IMR-90 (cell line): ENCODE measurements at regions of chr11 and their contacts with region 1.

Region 1: GRCh38 chr11:8813658-8814057 is 97.3 kb upstream of the AKIP1 start:
- DNase-seq: peak; percentile 89
- ATAC-seq: peak; percentile 65
- H3K4me3 ChIP-seq: no peak overlapping the region
- H3K27ac ChIP-seq: peak overlapping the region; percentile 54; the same call in 1 of the 2 replicates
- H3K4me1 ChIP-seq: peaks cover 28% of the 10 kb centered on the region
- H3K27me3 ChIP-seq: no peaks in the 10 kb centered on the region
- CTCF ChIP-seq: peak; percentile 93
- POLR2A ChIP-seq: no peak
- RAD21 ChIP-seq: peak; percentile 89

Region 2: GRCh38 chr11:8283465-8284230 is 530.0 kb before region 1 on chr11:
- CTCF ChIA-PET with region 1: no interaction called
- POLR2A ChIA-PET with region 1: no interaction called
- dilution Hi-C with region 1: no loop called
- in situ Hi-C with region 1: no loop called
- intact Hi-C with region 1: no loop called
- DNase-seq: no peak
- ATAC-seq: peak; percentile 21; the same call in 1 of the 2 replicates
- H3K4me3 ChIP-seq: no peak overlapping the region
- H3K27ac ChIP-seq: no peak overlapping the region
- H3K4me1 ChIP-seq: no peaks in the 10 kb centered on the region
- H3K27me3 ChIP-seq: peaks cover 21% of the 10 kb centered on the region
- CTCF ChIP-seq: no peak
- POLR2A ChIP-seq: no peak
- RAD21 ChIP-seq: no peak

Region 3: DNA sequence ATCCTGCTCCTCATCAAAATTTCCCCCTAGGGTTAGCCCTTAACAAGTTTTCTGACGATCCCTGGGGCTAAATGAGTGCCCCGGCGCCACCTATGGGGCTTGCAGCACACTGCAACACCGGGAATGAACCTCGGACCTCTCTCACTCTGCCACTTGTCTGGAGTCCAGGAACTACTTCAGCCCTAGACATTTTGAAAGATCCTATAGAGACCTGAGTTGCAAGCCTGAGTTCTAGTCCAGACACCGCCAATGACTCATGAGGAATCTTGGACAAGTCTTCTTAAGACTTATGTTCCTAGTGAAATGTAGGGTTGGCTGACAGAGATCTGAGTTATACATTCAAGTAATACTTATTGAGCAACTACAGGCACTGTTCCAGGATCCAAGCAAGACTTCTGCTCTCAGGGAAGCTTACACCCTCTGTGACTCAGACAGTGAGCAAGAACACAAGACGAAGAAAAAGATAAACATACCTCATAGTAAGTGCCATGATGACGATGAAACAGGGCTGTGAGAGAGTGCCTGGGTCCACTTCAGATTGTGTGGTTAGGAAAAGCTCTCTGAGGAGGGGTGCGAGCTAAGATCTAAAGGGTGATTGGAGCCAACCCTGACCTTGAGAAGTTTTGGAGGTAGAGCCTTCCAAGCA is 209.5 kb before region 1 on chr11:
- CTCF ChIA-PET with region 1: no interaction called
- POLR2A ChIA-PET with region 1: no interaction called
- dilution Hi-C with region 1: no loop called
- in situ Hi-C with region 1: no loop called
- intact Hi-C with region 1: loop called (anchors 5 kb)
- DNase-seq: peak; percentile 100
- ATAC-seq: peak; percentile 93
- H3K4me3 ChIP-seq: no peak overlapping the region
- H3K27ac ChIP-seq: peak overlapping the region; percentile 74
- H3K4me1 ChIP-seq: peaks cover 11% of the 10 kb centered on the region
- H3K27me3 ChIP-seq: no peaks in the 10 kb centered on the region
- CTCF ChIP-seq: peak; percentile 75
- POLR2A ChIP-seq: no peak
- RAD21 ChIP-seq: peak; percentile 59

Region 4: GRCh38 chr11:8658321-8659057 is 155.2 kb before region 1 on chr11:
- CTCF ChIA-PET with region 1: no interaction called
- POLR2A ChIA-PET with region 1: no interaction called
- dilution Hi-C with region 1: no loop called
- in situ Hi-C with region 1: no loop called
- intact Hi-C with region 1: no loop called
- DNase-seq: peak; percentile 5
- ATAC-seq: peak; percentile 24; the same call in 1 of the 2 replicates
- H3K4me3 ChIP-seq: no peak overlapping the region
- H3K27ac ChIP-seq: no peak overlapping the region
- H3K4me1 ChIP-seq: peaks cover 6% of the 10 kb centered on the region; the same call in 1 of the 2 replicates
- H3K27me3 ChIP-seq: no peaks in the 10 kb centered on the region
- CTCF ChIP-seq: no peak
- POLR2A ChIP-seq: no peak
- RAD21 ChIP-seq: no peak

Region 5: DNA sequence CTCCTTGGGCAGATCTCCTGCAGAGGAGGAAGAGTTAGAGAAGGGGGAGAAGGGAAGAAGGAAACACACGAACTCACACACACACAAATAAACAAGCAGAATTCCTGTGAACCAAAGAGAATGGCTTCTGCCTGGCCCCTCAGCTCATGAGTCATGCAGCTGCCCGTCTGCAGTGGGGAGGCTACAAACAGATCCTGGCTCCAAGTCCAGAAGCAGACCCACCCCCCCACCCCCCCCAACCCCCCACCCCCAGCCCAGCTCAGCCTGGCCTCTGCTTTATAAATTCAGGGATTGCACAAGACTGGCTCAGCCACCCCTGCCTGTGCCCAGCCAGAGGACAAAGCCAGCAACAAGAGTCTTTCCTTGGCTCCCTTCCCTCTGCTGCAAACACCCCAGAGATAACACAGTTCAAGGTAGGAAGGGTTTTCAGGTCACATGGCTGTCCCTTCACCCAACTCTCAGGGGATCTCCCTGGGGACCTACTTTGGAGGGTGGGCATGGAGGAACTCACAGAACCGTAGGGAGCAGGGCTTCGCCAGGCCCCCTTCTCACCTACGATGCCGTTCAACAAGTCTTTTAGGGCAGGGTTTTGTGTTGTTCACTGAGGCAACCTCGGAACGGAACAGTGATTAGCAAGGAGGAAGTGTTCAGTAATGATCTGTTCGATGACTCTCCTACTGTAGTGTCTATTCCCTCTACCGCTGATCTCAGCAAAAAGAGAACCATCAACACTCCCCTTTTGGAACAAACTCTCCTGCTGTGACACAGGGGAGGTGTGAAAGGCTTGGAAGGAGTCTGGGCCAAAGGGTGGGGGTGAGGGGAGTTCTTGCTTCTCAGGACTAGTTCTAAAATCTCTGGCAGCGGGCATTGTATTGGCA is 95.5 kb before region 1 on chr11:
- CTCF ChIA-PET with region 1: interaction called, 3 read pairs
- POLR2A ChIA-PET with region 1: interaction called, 4 read pairs
- dilution Hi-C with region 1: no loop called
- in situ Hi-C with region 1: no loop called
- intact Hi-C with region 1: loop called (anchors 2 kb)
- DNase-seq: peak; percentile 97
- ATAC-seq: peak; percentile 44
- H3K4me3 ChIP-seq: peak overlapping the region; percentile 19; the same call in 1 of the 2 replicates
- H3K27ac ChIP-seq: peak overlapping the region; percentile 99
- H3K4me1 ChIP-seq: peaks cover 62% of the 10 kb centered on the region
- H3K27me3 ChIP-seq: no peaks in the 10 kb centered on the region
- CTCF ChIP-seq: no peak
- POLR2A ChIP-seq: peak; percentile 60; the same call in 1 of the 2 replicates
- RAD21 ChIP-seq: no peak; the same call in 1 of the 2 replicates

Region 6: GRCh38 chr11:8870411-8871170 is 56.9 kb after region 1 on chr11:
- CTCF ChIA-PET with region 1: interaction called, 3 read pairs
- POLR2A ChIA-PET with region 1: interaction called, 6 read pairs
- dilution Hi-C with region 1: no loop called
- in situ Hi-C with region 1: no loop called
- intact Hi-C with region 1: loop called (anchors 2 kb)
- DNase-seq: peak; percentile 75
- ATAC-seq: peak; percentile 79
- H3K4me3 ChIP-seq: peak overlapping the region; percentile 51
- H3K27ac ChIP-seq: peak overlapping the region; percentile 78
- H3K4me1 ChIP-seq: peaks cover 12% of the 10 kb centered on the region
- H3K27me3 ChIP-seq: no peaks in the 10 kb centered on the region
- CTCF ChIP-seq: no peak
- POLR2A ChIP-seq: no peak
- RAD21 ChIP-seq: no peak

Region 7: DNA sequence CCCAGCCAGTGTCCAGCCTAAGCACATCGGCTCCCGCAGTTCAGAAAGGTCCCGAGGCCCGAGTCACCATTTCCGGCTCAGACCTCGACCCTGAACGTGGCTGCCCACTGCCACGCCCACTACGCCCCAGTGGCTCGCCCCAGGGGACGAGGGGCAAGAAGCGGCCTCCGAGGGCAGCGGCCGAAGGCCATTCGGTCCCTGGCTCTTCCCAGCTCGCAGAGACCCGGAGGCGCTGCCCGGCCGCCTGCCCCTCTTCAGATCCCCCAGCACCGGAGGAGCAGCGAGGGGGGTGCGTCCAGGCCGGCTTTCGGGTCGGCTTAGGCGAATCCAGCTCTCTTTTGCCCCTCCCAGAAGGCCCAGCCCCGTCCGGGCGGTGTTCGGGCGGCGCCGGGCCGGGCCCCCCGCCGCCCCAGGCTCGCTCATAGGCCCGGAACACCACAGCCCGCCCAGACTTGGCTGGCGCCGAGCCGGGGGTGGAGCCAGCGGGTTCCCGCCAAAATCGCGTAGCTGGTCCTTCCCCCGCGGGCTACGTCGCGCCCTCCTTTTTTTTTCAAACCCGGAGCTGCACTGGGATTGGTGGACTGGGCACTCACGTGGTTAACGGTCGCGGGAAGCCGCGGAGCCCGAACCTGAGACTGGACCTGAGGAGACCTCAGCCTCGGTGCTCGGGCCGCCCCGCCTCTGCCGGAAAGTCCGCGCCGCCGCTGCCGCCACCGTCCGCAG is 759.6 kb after region 1 on chr11 and contains the start of gene WEE1:
- CTCF ChIA-PET with region 1: no interaction called
- POLR2A ChIA-PET with region 1: no interaction called
- dilution Hi-C with region 1: no loop called
- in situ Hi-C with region 1: no loop called
- intact Hi-C with region 1: no loop called
- DNase-seq: peak; percentile 98
- ATAC-seq: peak; percentile 88
- H3K4me3 ChIP-seq: peak within 1 kb of the TSS; percentile 76
- H3K27ac ChIP-seq: peak within 1 kb of the TSS; percentile 94
- H3K4me1 ChIP-seq: no peaks in the 10 kb centered on the region
- H3K27me3 ChIP-seq: no peaks in the 10 kb centered on the region
- CTCF ChIP-seq: no peak
- POLR2A ChIP-seq: peak; percentile 91
- RAD21 ChIP-seq: no peak
- total RNA-seq, gene WEE1: 29.2 and 45.5 TPM in 2 replicates